Esophagus muscularis mucosa (tissue), 4 donors: ENCODE measurements at regions of chr12 and their contacts with region 1.

Region 1: DNA sequence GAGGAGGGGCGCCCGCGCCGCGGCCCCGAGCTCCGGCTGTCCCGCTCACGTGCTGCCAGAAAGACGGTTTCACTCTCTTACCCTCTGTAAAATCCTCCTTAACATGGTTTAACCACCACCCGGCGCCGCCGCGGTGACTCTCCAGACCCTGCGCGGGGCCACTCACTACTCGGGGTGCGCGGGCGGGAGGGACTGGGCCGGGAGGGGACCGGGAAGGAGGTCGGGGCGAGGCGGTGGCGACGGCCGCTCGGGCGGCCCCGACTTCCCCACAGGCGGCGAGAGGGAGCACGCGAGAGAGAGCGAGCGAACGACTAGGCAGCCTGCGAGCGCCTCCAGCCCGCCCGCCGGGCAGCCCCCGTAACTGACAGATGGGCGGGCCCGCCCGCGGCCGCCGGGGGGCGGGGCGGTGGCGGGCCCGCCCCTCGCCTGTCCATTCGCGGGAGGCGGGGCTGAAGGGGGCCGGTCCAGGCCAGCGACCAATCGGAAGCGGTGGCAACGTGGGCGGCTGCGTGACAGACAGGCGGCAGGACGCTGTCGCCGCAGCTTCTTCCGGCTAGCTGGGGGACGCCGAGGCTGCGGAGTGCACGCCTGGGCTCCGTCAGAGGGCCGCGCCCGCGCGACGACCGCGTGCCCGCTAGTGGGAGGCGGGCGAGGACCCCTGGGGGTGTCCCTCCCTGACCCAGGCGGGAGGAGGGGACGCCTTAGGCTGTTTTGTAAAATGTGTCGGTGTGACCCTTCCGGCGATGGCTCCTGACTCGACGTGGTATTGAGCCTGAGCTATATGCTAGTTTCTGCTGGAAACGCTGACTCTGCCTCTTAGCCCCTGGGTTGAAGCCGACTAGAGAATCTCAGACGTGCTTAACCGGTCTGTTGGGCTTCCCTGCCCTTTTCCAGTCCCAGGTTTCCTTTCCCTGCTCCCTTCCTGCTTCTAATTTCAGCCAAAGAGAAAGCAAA is at the start of gene EEA1:
- DNase-seq: peak; percentile 98
- H3K4me3 ChIP-seq: peak within 1 kb of the TSS; percentile 91 to 99 (median 92)
- H3K27ac ChIP-seq: peak within 1 kb of the TSS; percentile 99 to 100 (median 99)
- H3K4me1 ChIP-seq: peaks cover 19 to 45% (median 32%) of the 10 kb centered on the region in 4 donors
- H3K27me3 ChIP-seq: no peaks in the 10 kb centered on the region
- CTCF ChIP-seq: peak; percentile 15 to 27 (median 18)
- EP300 ChIP-seq: no peak
- POLR2A ChIP-seq: peak; percentile 75
- total RNA-seq, gene EEA1: 15.7 to 31.1 (median 24.1) TPM

Region 2: DNA sequence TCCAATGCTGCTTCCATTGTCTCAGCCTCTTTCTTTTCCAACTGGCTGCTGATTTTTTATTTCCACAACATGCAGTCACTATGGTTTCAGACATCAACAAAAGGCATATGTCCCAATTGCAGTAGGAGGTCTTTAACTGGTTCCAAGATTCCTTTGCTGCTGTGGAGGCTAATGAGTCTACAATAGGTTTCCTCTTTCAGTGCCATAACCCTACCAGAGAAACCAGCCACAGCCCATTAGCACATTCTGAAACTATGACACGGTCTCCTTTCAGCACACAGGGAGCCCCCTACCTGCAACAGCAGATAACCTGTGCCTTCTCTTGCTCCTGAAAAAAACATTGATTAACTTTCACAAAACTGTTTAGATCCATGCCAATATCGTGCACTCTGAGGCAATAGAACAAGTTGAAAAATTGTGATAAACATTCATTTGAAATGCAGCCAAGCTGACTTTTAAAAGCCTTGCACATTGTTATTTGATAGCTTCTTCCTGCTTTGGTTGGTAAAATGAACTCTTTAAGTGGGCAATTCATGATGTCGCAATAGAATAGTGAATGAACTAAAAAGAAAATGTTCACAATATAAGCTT is 194.0 kb before region 1 on chr12:
- intact Hi-C with region 1: no loop called
- DNase-seq: peak; percentile 60
- H3K4me3 ChIP-seq: no peak overlapping the region
- H3K27ac ChIP-seq: no peak overlapping the region
- H3K4me1 ChIP-seq: peaks cover 8 to 21% (median 15%) of the 10 kb centered on the region in 4 donors
- H3K27me3 ChIP-seq: no peaks in the 10 kb centered on the region
- CTCF ChIP-seq: no peak
- EP300 ChIP-seq: no peak
- POLR2A ChIP-seq: no peak

Region 3: GRCh38 chr12:92890601-92891106 is 38.6 kb before region 1 on chr12:
- intact Hi-C with region 1: loop called (anchors 5 kb)
- DNase-seq: no peak
- H3K4me3 ChIP-seq: no peak overlapping the region
- H3K27ac ChIP-seq: no peak overlapping the region
- H3K4me1 ChIP-seq: peaks cover 0 to 8% (median 0%) of the 10 kb centered on the region in 4 donors
- H3K27me3 ChIP-seq: no peaks in the 10 kb centered on the region
- CTCF ChIP-seq: no peak
- EP300 ChIP-seq: no peak
- POLR2A ChIP-seq: no peak